Natural killer cell (primary cell): ENCODE measurements at regions of chr9 and their contacts with region 1.

Region 1: GRCh38 chr9:125758986-125759763 is 12.0 kb downstream of the PBX3 start:
- DNase-seq: no peak
- ATAC-seq: peak; percentile 56 to 68 (median 67)
- H3K4me3 ChIP-seq: peak overlapping the region; percentile 8
- H3K4me3 Mint-ChIP-seq: peak overlapping the region; percentile 86
- H3K27ac ChIP-seq: no peak overlapping the region
- H3K27ac Mint-ChIP-seq: peak overlapping the region; percentile 60 to 86
- H3K4me1 ChIP-seq: peaks cover 10% of the 10 kb centered on the region
- H3K4me1 Mint-ChIP-seq: peaks cover 26 to 28% of the 10 kb centered on the region in 2 donors
- H3K27me3 ChIP-seq: no peaks in the 10 kb centered on the region
- H3K27me3 Mint-ChIP-seq: no peaks in the 10 kb centered on the region
- CTCF ChIP-seq: no peak

Region 2: GRCh38 chr9:125284855-125285254 is 474.3 kb before region 1 on chr9:
- intact Hi-C with region 1: no loop called
- DNase-seq: no peak
- ATAC-seq: peak in 1 of 3 donors; percentile 44
- H3K4me3 ChIP-seq: no peak overlapping the region
- H3K4me3 Mint-ChIP-seq: no peak overlapping the region
- H3K27ac ChIP-seq: no peak overlapping the region
- H3K27ac Mint-ChIP-seq: no peak overlapping the region
- H3K4me1 ChIP-seq: no peaks in the 10 kb centered on the region
- H3K4me1 Mint-ChIP-seq: peaks cover 7 to 9% of the 10 kb centered on the region in 2 donors
- H3K27me3 ChIP-seq: no peaks in the 10 kb centered on the region
- H3K27me3 Mint-ChIP-seq: no peaks in the 10 kb centered on the region
- CTCF ChIP-seq: no peak

Region 3: GRCh38 chr9:125593585-125594229 is 165.5 kb before region 1 on chr9:
- intact Hi-C with region 1: no loop called
- DNase-seq: no peak
- ATAC-seq: no peak
- H3K4me3 ChIP-seq: no peak overlapping the region
- H3K4me3 Mint-ChIP-seq: no peak overlapping the region
- H3K27ac ChIP-seq: no peak overlapping the region
- H3K27ac Mint-ChIP-seq: peak overlapping the region in 1 of 2 donors; percentile 0
- H3K4me1 ChIP-seq: no peaks in the 10 kb centered on the region
- H3K4me1 Mint-ChIP-seq: peaks cover 30 to 48% of the 10 kb centered on the region in 2 donors
- H3K27me3 ChIP-seq: no peaks in the 10 kb centered on the region
- H3K27me3 Mint-ChIP-seq: no peaks in the 10 kb centered on the region
- CTCF ChIP-seq: no peak

Region 4: GRCh38 chr9:125820100-125820804 is 61.1 kb after region 1 on chr9:
- intact Hi-C with region 1: loop called (anchors 2 kb)
- DNase-seq: peak in 1 of 2 donors; percentile 41
- ATAC-seq: peak; percentile 31 to 58 (median 37)
- H3K4me3 ChIP-seq: no peak overlapping the region
- H3K4me3 Mint-ChIP-seq: no peak overlapping the region
- H3K27ac ChIP-seq: no peak overlapping the region
- H3K27ac Mint-ChIP-seq: peak overlapping the region; percentile 57 to 65
- H3K4me1 ChIP-seq: peaks cover 7% of the 10 kb centered on the region
- H3K4me1 Mint-ChIP-seq: peaks cover 13 to 29% of the 10 kb centered on the region in 2 donors
- H3K27me3 ChIP-seq: no peaks in the 10 kb centered on the region
- H3K27me3 Mint-ChIP-seq: no peaks in the 10 kb centered on the region
- CTCF ChIP-seq: no peak